SK-N-SH (cell line): ENCODE measurements at regions of chrX and their contacts with region 1.

Region 1: GRCh38 chrX:72018277-72019112 is 107.8 kb downstream of the NHSL2 start:
- DNase-seq: peak; percentile 97
- H3K4me3 ChIP-seq: no peak overlapping the region
- H3K27ac ChIP-seq: no peak overlapping the region
- H3K4me1 ChIP-seq: peaks cover 3 to 7% of the 10 kb centered on the region in 2 experiments; a peak in 1 of 4 replicates
- H3K27me3 ChIP-seq: peaks cover 19% of the 10 kb centered on the region; the same call in 1 of the 2 replicates
- CTCF ChIP-seq: peak; percentile 70
- EP300 ChIP-seq: peak in 1 of 2 experiments; percentile 15; a peak in 1 of 4 replicates
- RAD21 ChIP-seq: peak; percentile 72

Region 2: DNA sequence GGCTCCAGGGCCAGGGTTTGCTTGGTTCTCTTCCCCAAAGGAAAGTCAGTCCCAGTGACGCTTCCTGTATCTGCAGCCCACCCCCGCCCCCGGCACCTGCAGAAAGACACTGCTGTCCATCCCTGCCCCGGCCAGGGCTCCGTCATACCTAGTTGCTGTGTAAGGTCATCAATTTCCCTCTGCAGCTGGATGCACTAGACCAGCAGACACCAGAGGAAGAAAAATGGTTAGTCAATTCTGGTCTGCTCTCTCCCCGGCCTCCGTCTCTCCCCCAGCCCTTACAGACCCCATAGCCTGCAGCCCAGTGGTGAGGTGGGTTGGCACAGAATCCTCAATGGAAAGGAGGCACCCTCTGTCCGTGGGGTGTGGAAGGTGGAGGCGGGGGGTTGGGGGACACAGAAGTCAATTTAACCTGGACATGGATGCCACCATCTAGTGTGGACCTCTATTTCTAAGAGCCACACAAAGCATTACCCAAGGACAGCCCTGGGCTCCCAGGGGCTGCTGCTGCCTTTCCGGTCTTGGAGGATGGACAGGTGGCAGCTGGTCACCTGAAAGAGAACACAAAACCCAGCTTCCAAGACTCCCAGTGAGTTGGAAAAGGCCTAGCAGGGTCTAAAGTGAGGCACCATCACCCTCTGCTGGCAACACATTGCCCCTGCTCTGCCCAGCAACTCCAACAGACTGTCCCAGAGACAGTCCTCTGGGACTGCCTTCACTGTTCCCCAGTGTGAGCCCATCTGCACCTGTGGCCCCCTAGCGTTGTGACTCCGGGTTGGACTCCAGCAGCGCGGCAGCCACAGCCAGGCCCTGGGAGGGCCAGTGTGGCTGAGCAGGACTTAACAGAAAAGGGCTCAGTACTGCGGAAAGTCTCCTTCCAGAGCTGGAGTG is 148.0 kb before region 1 on chrX:
- CTCF ChIA-PET with region 1: no interaction called
- POLR2A ChIA-PET with region 1: no interaction called
- DNase-seq: no peak
- H3K4me3 ChIP-seq: no peak overlapping the region
- H3K27ac ChIP-seq: no peak overlapping the region
- H3K4me1 ChIP-seq: no peaks in the 10 kb centered on the region
- H3K27me3 ChIP-seq: peaks cover 47% of the 10 kb centered on the region
- CTCF ChIP-seq: peak; percentile 36; the same call in 1 of the 2 replicates
- EP300 ChIP-seq: no peak
- RAD21 ChIP-seq: peak; percentile 47

Region 3: GRCh38 chrX:71935476-71935875 is 83.0 kb before region 1 on chrX:
- CTCF ChIA-PET with region 1: no interaction called
- POLR2A ChIA-PET with region 1: no interaction called
- DNase-seq: no peak
- H3K4me3 ChIP-seq: no peak overlapping the region
- H3K27ac ChIP-seq: no peak overlapping the region
- H3K4me1 ChIP-seq: no peaks in the 10 kb centered on the region
- H3K27me3 ChIP-seq: peaks cover 21% of the 10 kb centered on the region
- CTCF ChIP-seq: no peak
- EP300 ChIP-seq: no peak
- RAD21 ChIP-seq: no peak

Region 4: DNA sequence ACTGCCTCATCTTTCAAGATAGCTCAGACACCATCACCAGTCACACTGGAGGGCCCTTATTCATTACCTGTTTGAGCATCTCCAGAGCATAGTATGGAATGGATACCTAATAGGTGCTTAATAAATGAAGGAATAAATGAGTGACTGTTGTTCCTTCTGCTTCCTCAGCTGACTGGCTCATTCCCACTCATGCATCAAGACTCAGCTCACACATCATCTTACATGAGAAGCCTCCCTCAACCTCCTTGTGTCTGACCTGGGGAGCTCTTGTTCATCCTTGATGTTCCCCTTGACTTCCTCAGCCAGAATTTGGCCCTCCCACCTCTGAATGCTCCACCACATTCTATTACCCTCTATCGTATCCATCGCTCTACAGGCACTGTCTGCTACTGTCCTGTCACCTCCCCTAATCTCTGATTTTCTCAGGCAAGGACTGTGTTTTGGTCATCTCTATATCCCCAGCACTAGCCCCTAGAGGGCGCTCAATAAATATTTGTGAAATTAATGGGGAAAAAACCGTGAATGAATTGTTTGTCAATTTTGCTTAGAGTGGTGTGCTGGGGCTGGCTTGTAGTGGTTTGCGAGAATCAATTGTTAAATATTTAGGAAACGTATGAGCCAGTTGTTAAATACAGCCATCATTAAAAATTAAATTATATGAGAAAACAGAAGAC is 19.5 kb before region 1 on chrX:
- CTCF ChIA-PET with region 1: interaction called, 57 read pairs
- POLR2A ChIA-PET with region 1: no interaction called
- DNase-seq: peak; percentile 76
- H3K4me3 ChIP-seq: no peak overlapping the region; a peak in 1 of 4 replicates
- H3K27ac ChIP-seq: no peak overlapping the region
- H3K4me1 ChIP-seq: peaks cover 0 to 3% of the 10 kb centered on the region in 2 experiments; a peak in 1 of 4 replicates
- H3K27me3 ChIP-seq: peaks cover 5% of the 10 kb centered on the region; the same call in 1 of the 2 replicates
- CTCF ChIP-seq: peak; percentile 88
- EP300 ChIP-seq: no peak
- RAD21 ChIP-seq: peak; percentile 81

Region 5: GRCh38 chrX:72029483-72030411 is 11.3 kb after region 1 on chrX:
- CTCF ChIA-PET with region 1: interaction called, 84 read pairs
- POLR2A ChIA-PET with region 1: no interaction called
- DNase-seq: peak; percentile 47
- H3K4me3 ChIP-seq: peak overlapping the region in 1 of 2 experiments; percentile 40; a peak in 1 of 4 replicates
- H3K27ac ChIP-seq: peak overlapping the region; percentile 61 to 78
- H3K4me1 ChIP-seq: peaks cover 18 to 33% of the 10 kb centered on the region in 2 experiments
- H3K27me3 ChIP-seq: 0 out of 2 replicates have a peak, but pooled peaks cover 9% of the 10 kb centered on the region
- CTCF ChIP-seq: no peak
- EP300 ChIP-seq: peak; percentile 57 to 90
- RAD21 ChIP-seq: no peak

Region 6: DNA sequence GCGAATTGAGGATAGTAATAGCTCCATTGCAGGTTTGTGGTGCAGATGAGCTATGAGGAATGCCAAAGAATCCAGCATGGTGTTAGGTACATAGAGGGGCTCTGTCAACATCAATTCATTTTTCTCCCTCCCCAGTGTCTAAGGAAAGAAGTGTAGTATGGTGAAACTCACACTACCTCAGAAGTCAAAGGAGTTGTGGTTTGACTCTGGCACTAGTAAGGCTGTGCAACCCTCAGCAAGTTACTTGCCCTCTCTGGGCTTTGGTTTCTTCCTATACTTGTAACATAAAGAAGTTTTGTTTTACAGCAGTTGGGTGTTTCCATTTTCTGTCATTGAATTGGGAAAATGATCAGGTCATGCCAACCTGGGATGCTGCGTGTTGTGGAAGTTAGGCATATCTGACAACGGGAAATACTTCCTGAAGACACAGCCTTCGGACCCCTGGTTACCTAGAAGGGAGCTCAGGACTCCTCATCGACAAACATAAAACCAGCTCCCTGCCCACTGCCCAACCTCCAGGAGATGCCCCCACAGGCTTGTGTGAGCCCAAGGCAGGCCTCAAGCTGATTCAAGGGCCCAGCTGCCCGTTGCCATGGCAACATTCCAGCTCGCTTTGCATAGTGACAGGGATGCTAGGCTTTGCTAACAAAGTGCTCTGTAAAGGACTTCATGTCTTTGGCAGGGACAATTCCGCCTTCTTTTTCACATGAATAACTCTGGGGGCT is 41.9 kb after region 1 on chrX:
- CTCF ChIA-PET with region 1: interaction called, 10 read pairs
- POLR2A ChIA-PET with region 1: interaction called, 3 read pairs
- DNase-seq: peak; percentile 68
- H3K4me3 ChIP-seq: no peak overlapping the region
- H3K27ac ChIP-seq: peak overlapping the region in 1 of 2 experiments; percentile 41; a peak in 2 of 4 replicates
- H3K4me1 ChIP-seq: peaks cover 0 to 16% of the 10 kb centered on the region in 2 experiments; a peak in 2 of 4 replicates
- H3K27me3 ChIP-seq: peaks cover 5% of the 10 kb centered on the region; the same call in 1 of the 2 replicates
- CTCF ChIP-seq: no peak
- EP300 ChIP-seq: no peak
- RAD21 ChIP-seq: peak; percentile 40

Region 7: GRCh38 chrX:72079607-72080006 is 61.1 kb after region 1 on chrX:
- CTCF ChIA-PET with region 1: interaction called, 29 read pairs
- POLR2A ChIA-PET with region 1: no interaction called
- DNase-seq: no peak
- H3K4me3 ChIP-seq: no peak overlapping the region
- H3K27ac ChIP-seq: peak overlapping the region in 1 of 2 experiments; percentile 95; a peak in 2 of 4 replicates
- H3K4me1 ChIP-seq: peaks cover 0 to 66% of the 10 kb centered on the region in 2 experiments; a peak in 2 of 4 replicates
- H3K27me3 ChIP-seq: peaks cover 5% of the 10 kb centered on the region
- CTCF ChIP-seq: no peak
- EP300 ChIP-seq: no peak
- RAD21 ChIP-seq: no peak

Region 8: DNA sequence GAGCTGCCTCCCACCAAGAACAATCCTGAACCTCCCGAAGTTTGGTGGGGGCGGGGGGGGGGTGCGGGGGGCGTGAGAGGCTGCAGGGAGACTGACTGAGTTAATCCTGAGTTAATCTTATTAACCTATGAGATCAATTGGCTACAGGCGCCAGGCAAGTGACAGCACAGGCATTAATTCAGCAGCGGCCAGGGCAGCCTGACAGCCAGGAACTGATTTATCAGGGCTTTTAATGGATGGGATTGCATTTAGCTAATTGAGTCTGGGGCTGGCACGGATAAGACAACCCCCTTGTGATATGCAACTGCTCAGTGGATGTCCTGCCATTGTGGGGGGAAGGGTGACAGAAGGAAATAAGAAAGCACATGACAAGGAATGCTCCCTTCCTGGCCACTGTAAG is 96.9 kb after region 1 on chrX:
- CTCF ChIA-PET with region 1: interaction called, 257 read pairs
- POLR2A ChIA-PET with region 1: no interaction called
- DNase-seq: peak; percentile 83
- H3K4me3 ChIP-seq: no peak overlapping the region
- H3K27ac ChIP-seq: peak overlapping the region in 1 of 2 experiments; percentile 95; a peak in 2 of 4 replicates
- H3K4me1 ChIP-seq: peaks cover 0 to 40% of the 10 kb centered on the region in 2 experiments; a peak in 2 of 4 replicates
- H3K27me3 ChIP-seq: no peaks in the 10 kb centered on the region; the same call in 1 of the 2 replicates
- CTCF ChIP-seq: no peak
- EP300 ChIP-seq: peak in 1 of 2 experiments; percentile 99; a peak in 2 of 4 replicates
- RAD21 ChIP-seq: peak; percentile 35; the same call in 1 of the 2 replicates